ENCODE measurements at regions of chr5 and their contacts with region 1.

Region 1: DNA sequence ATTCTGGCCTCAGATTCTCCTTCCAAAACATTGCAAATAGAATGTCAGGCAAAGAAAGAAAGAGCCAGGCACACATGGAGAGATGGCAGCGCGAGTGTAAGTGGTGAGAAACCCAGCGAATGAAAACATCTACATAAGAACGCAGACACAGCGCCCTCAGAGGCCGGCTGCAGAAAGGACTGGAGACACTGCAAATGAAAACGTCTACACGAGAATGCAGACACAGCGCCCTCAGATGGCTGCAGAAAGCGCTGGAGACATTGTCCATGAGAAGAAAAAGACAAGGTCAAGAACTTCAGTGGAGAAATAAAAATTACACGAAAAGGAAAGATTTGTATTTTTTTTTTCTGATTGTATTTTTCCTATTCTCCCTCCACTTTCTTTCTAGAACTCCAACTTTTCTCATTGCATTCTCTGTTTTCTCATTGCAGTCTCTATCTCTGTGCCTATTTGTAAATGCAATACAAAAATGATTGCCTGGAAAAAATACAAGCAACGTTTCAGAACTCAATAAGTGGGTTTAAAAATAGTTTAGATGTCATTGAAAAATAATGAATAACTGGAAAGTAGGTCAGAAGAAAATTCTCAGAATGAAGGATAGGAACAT is 117.9 kb upstream of the LPCAT1 start:
- DNase-seq: peak; percentile 72 to 81
- ATAC-seq: peak in 7 of 8 donors; percentile 43 to 66 (median 60)
- H3K4me3 ChIP-seq: no peak overlapping the region
- H3K27ac ChIP-seq: no peak overlapping the region
- H3K4me1 ChIP-seq: peaks cover 0 to 17% (median 7%) of the 10 kb centered on the region in 9 donors
- H3K27me3 ChIP-seq: peaks cover 7 to 41% (median 24%) of the 10 kb centered on the region in 7 donors
- CTCF ChIP-seq: peak; percentile 51 to 91 (median 73)

Region 2: GRCh38 chr5:923281-923873 is 718.3 kb before region 1 on chr5:
- intact Hi-C with region 1: loop called in 3 of 10 experiments (anchors 10 kb)
- DNase-seq: peak; percentile 75 to 88
- ATAC-seq: peak; percentile 84 to 95 (median 91)
- H3K4me3 ChIP-seq: no peak overlapping the region
- H3K27ac ChIP-seq: no peak overlapping the region
- H3K4me1 ChIP-seq: peaks cover 0 to 19% (median 11%) of the 10 kb centered on the region in 9 donors
- H3K27me3 ChIP-seq: peaks cover 0 to 45% (median 29%) of the 10 kb centered on the region in 7 donors
- CTCF ChIP-seq: peak; percentile 65 to 95 (median 87)

Region 3: DNA sequence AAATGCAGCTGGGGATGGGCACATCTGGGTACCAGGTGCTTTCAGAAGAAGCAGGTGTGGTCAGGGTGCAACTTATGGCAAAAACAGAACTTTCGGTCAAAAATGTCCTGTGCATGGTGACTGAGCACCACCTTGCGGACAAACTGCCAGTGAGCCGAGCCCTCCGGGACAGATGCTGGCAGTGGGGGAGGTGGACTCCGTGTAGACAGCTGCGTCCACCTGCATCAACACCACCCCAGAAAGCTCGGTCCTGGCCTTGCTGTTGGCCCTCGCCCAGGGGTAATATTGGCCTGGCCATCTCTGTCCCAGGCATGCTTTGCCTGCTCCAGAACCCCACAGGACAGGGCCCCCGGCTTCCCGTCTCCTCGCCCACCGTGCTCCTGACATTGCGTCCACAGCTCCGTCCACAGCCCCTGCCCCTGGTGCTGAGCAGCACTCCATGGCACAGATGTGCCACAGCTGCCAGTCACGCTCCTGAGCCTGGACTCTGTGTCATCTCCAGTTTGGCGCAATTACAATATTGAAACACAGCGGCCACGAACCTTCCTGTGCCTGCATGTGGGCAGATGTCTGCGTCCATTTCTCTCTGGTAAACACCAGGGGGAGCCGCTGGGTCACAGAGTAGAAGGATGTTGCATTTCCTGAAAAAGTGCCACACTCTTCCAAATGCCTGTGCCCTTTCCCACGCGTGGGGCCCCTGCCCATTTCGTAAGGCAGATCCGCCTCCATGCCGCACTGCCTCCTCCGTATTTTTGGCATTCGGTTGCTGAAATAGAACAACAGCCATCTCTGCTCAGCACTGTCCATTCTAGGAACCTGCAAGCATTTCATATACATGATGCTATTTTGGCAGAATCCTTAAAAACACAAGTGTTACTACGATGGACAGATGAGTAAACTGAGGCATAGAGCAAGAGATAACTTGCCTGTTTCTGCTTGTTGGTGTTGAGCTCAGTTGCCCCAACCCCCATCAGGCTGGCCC is 473.6 kb before region 1 on chr5:
- intact Hi-C with region 1: loop called in 9 of 10 experiments (anchors 2 to 10 kb)
- DNase-seq: peak; percentile 56 to 73
- ATAC-seq: peak; percentile 53 to 88 (median 79)
- H3K4me3 ChIP-seq: peak overlapping the region in 7 of 10 donors; percentile 4 to 29 (median 16)
- H3K27ac ChIP-seq: no peak overlapping the region
- H3K4me1 ChIP-seq: peaks cover 0 to 12% (median 9%) of the 10 kb centered on the region in 9 donors
- H3K27me3 ChIP-seq: peaks cover 0 to 8% (median 0%) of the 10 kb centered on the region in 7 donors
- CTCF ChIP-seq: peak; percentile 42 to 74 (median 66)

Region 4: DNA sequence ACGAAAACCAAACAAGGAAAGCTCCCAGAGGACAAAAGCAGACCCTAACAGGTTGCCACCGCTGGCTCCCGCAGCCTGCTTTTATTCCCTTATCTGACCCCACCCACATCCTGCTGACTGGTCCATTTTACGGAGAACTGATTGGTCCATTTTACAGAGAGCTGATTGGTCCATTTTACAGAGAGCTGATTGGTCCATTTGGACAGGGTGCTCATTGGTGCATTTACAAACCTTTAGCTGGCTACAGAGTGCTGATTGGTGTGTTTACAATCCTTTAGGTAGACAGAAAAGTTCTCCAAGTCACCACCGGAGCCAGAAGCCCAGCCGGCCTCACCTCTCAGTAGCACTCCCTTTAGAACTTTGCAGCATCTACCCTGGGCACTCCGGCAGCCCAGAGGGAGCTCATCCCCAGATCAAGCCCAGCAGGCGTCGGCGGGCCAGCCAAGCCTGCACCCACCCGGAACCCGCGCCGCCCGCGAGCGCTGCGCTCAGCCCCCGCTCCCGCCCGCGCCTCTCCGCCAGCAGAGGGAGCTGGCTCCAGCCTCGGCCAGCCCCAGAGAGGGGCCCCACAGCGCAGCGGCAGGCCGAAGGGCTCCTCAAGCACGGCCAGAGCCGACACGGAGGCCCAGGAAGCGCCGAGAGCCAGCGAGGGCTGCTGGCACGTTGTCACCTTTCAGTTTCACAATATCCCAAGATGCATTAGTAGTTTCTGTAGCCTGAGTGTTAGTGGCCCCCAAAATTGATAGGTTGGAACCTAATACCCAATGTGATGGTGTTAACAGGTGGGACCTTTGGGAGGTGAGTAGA is 261.4 kb before region 1 on chr5:
- intact Hi-C with region 1: loop called in 5 of 10 experiments (anchors 5 to 10 kb)
- DNase-seq: peak in 1 of 2 donors; percentile 56
- ATAC-seq: peak; percentile 70 to 81 (median 78)
- H3K4me3 ChIP-seq: peak overlapping the region in 3 of 10 donors; percentile 8 to 14 (median 10)
- H3K27ac ChIP-seq: no peak overlapping the region
- H3K4me1 ChIP-seq: peaks cover 0 to 9% (median 4%) of the 10 kb centered on the region in 9 donors
- H3K27me3 ChIP-seq: peaks cover 0 to 60% (median 34%) of the 10 kb centered on the region in 7 donors
- CTCF ChIP-seq: peak in 8 of 9 donors; percentile 47 to 83 (median 70)

Region 5: DNA sequence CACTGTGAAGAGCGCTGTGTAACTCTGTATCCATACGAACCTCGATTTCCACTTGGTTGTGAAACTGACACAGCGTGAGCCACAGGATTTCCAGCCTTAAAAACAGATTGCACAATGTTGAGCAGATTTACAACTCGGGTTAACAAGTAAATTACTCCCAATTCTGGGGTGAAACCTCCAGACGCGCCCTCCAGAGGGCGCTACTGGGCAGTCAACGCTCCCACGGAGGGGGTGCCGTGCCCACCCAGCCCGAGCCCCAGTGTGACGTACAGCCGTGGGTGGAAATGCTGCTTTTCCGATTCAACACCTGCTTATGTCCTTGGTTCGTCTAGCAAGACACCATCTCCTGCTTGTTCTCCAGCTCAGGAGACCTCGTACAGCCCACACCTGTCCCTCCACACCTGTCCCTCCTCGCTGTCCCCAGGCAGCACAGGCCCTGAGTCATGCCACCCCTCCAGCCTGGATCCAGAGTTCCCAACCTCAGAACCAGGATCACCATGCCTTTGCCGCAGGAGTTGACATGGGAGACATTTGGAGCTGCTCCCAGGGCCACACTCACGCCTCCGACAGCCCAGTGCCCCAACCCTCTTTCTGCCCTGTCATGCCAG is 162.0 kb before region 1 on chr5:
- intact Hi-C with region 1: loop called in 1 of 10 experiments (anchors 10 kb)
- DNase-seq: peak in 1 of 2 donors; percentile 44
- ATAC-seq: peak in 4 of 8 donors; percentile 3 to 38 (median 20)
- H3K4me3 ChIP-seq: peak overlapping the region in 1 of 10 donors; percentile 9
- H3K27ac ChIP-seq: peak overlapping the region in 4 of 10 donors; percentile 21 to 92 (median 42)
- H3K4me1 ChIP-seq: peaks cover 0 to 52% (median 0%) of the 10 kb centered on the region in 9 donors
- H3K27me3 ChIP-seq: no peaks in the 10 kb centered on the region
- CTCF ChIP-seq: peak in 8 of 9 donors; percentile 37 to 81 (median 64)

Region 6: DNA sequence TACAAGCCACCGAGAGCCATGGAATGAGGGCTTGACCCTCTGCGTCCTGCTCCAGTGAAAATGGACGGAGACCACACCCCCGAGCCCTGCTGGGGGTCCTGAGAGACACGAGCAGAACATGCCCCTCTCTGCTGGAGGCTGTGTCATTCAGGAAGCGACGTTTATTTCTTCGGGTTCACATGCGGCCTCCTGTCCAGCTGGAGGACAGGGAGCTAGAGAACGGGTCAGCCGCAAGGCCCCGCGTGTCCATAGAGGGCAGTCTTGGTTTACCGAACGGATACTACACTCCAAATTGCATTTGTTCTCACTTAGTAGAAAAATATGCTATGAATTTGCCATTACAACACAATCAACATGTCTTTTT is 121.9 kb after region 1 on chr5:
- intact Hi-C with region 1: no loop called
- DNase-seq: peak; percentile 19 to 35
- ATAC-seq: peak in 4 of 8 donors; percentile 67 to 74 (median 69)
- H3K4me3 ChIP-seq: no peak overlapping the region
- H3K27ac ChIP-seq: no peak overlapping the region
- H3K4me1 ChIP-seq: no peaks in the 10 kb centered on the region
- H3K27me3 ChIP-seq: peaks cover 0 to 54% (median 15%) of the 10 kb centered on the region in 7 donors
- CTCF ChIP-seq: peak; percentile 24 to 81 (median 71)

Region 7: GRCh38 chr5:1901061-1901460 is 259.4 kb after region 1 on chr5:
- intact Hi-C with region 1: no loop called
- DNase-seq: no peak
- ATAC-seq: no peak
- H3K4me3 ChIP-seq: no peak overlapping the region
- H3K27ac ChIP-seq: no peak overlapping the region
- H3K4me1 ChIP-seq: no peaks in the 10 kb centered on the region
- H3K27me3 ChIP-seq: peaks cover 0 to 19% (median 4%) of the 10 kb centered on the region in 7 donors
- CTCF ChIP-seq: no peak

Region 8: GRCh38 chr5:1997640-1998347 is 356.1 kb after region 1 on chr5:
- intact Hi-C with region 1: no loop called
- DNase-seq: no peak
- ATAC-seq: no peak
- H3K4me3 ChIP-seq: no peak overlapping the region
- H3K27ac ChIP-seq: no peak overlapping the region
- H3K4me1 ChIP-seq: no peaks in the 10 kb centered on the region
- H3K27me3 ChIP-seq: peaks cover 0 to 2% (median 0%) of the 10 kb centered on the region in 7 donors
- CTCF ChIP-seq: no peak